Endothelial cell of umbilical vein (primary cell): ENCODE measurements at regions of chr1 and their contacts with region 1.

Region 1: DNA sequence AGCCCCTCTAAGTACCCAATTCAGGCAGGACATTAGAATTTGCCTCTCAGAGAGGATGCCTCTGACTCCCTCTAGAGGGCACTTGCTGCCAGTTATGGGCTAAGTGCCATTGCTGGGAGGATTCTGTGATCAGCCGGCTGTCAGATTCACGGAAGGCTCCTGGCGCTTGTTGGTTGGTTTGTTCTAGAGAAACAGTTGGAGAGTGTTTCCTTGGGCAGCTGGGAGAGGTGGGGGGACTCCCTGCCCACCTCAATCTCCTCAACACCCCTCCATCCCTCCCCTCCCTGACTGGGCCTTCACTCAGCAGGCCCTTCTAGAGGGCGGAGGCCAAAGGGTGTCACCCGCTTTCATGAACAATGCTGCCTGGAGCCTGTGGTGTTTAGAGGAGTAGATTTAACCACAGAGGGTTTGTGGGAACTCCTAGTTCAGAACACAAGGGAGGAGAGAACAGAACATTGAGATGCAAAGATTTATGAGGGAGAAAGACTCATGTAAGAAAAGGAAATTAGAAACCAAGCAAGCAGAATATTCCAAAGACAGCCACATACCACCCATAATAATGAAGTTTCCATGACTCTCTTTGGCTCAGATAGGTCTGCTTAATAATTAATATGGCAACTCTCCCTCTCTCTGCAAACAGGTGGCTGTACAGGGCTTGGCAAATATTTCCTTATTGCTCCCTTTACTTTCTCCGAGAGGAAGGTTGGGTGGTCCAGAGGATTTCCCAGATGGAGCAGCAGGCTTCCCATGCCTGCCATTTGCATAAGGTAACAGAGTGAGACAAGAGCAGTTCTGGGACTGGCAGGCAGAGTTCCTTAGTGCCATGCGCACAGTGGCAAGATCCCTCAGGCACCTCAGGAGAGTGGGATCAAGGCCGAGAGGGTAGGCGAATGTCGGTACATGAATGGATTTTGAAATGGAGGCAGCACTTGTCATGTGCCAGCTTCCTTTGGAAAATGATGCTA is 30.0 kb upstream of the ACP6 start:
- DNase-seq: peak; percentile 65
- H3K4me3 ChIP-seq: no peak overlapping the region
- H3K27ac ChIP-seq: no peak overlapping the region
- H3K4me1 ChIP-seq: no peaks in the 10 kb centered on the region
- H3K27me3 ChIP-seq: peaks cover 0 to 3% of the 10 kb centered on the region in 2 experiments
- CTCF ChIP-seq: peak; percentile 87
- POLR2A ChIP-seq: no peak

Region 2: DNA sequence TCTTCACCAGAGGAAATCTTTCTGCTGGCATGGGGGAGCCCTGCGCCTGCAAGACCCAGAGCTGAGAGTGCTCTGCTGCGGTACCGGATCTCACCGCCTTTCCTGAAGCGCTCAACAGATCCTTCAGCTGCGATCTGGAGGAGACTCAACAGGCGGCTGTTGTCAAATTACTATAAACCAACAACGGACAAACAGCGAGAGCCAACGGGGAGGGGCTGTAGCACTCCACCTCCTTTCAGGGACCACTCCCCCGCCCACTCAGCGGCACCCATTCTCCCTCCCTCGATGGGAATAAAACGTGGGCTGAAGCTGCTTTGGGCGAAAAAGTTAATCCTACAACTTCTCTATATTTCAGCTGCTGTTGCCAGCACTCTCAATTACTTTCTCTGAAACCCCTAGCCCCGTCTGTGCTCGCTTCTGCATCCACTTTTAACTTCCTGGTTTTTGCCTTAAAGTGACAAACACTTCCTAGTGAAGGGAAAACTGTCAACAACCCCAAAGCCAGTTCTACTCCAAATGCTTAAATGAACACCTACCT is 475.1 kb before region 1 on chr1 and contains the start of gene FMO5:
- CTCF ChIA-PET with region 1: no interaction called
- POLR2A ChIA-PET with region 1: no interaction called
- dilution Hi-C with region 1: no loop called
- intact Hi-C with region 1: no loop called
- DNase-seq: peak; percentile 57
- H3K4me3 ChIP-seq: peak within 1 kb of the TSS; percentile 55 to 91 (median 60)
- H3K27ac ChIP-seq: no peak within 1 kb of the TSS
- H3K4me1 ChIP-seq: peaks cover 4% of the 10 kb centered on the region
- H3K27me3 ChIP-seq: peaks cover 2 to 4% of the 10 kb centered on the region in 2 experiments
- CTCF ChIP-seq: no peak
- POLR2A ChIP-seq: no peak
- total RNA-seq, gene FMO5: 0.60 and 1.3 TPM in 2 replicates

Region 3: DNA sequence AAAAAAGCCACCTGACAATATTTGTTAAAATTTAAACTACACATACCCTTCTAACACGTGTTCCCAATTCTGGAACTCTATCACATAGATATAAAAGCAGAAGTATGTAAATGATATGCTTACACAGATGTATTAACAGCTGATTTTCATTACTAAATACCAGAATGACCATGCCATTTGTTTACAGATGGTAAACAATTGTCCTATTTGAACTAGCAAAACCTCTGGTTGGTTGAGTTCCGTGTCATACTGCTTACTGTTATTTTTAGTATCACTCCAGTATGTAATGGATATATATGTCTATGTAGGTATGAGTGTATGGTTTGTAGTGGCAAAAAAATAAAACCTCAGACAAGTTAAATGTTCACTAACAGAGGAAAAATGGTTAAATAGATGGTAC is 387.1 kb before region 1 on chr1:
- CTCF ChIA-PET with region 1: no interaction called
- POLR2A ChIA-PET with region 1: no interaction called
- dilution Hi-C with region 1: no loop called
- intact Hi-C with region 1: no loop called
- DNase-seq: no peak
- H3K4me3 ChIP-seq: no peak overlapping the region
- H3K27ac ChIP-seq: no peak overlapping the region
- H3K4me1 ChIP-seq: no peaks in the 10 kb centered on the region
- H3K27me3 ChIP-seq: no peaks in the 10 kb centered on the region
- CTCF ChIP-seq: no peak
- POLR2A ChIP-seq: no peak

Region 4: GRCh38 chr1:147640553-147641165 is 59.7 kb before region 1 on chr1:
- CTCF ChIA-PET with region 1: no interaction called
- POLR2A ChIA-PET with region 1: no interaction called
- dilution Hi-C with region 1: no loop called
- intact Hi-C with region 1: loop called (anchors 1 kb)
- DNase-seq: peak; percentile 60
- H3K4me3 ChIP-seq: no peak overlapping the region
- H3K27ac ChIP-seq: no peak overlapping the region
- H3K4me1 ChIP-seq: no peaks in the 10 kb centered on the region
- H3K27me3 ChIP-seq: no peaks in the 10 kb centered on the region
- CTCF ChIP-seq: peak; percentile 94 to 96
- POLR2A ChIP-seq: no peak

Region 5: DNA sequence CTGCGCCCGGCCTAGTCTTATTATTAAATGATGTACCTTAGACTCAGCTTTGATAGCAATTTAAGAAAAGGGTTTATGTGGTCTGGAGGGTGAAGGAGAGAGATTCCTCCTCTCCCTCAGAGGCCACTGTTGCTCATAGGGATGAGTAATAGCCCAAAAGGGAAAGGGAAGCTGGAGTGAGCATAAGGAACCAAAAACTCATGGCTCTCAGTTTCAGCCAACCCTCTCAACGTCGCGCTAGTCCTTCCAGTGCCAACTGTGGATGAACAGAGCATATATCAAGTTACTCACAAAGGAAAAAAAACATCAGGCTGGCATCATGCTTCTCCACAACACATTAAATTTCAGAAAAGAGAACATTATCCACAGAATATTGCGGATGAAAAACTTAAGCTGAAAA is 219.6 kb after region 1 on chr1:
- CTCF ChIA-PET with region 1: no interaction called
- POLR2A ChIA-PET with region 1: no interaction called
- dilution Hi-C with region 1: no loop called
- intact Hi-C with region 1: no loop called
- DNase-seq: no peak
- H3K4me3 ChIP-seq: no peak overlapping the region
- H3K27ac ChIP-seq: no peak overlapping the region
- H3K4me1 ChIP-seq: no peaks in the 10 kb centered on the region
- H3K27me3 ChIP-seq: peaks cover 6 to 9% of the 10 kb centered on the region in 2 experiments
- CTCF ChIP-seq: no peak
- POLR2A ChIP-seq: no peak